Heart left ventricle (tissue), 16 donors: ENCODE measurements at regions of chr19 and their contacts with region 1.

Region 1: GRCh38 chr19:41449079-41449864 is 6.3 kb downstream of the ERICH4 start:
- DNase-seq: peak; percentile 74 to 89 (median 80)
- ATAC-seq: peak; percentile 70 to 93 (median 91)
- H3K4me3 ChIP-seq: peak overlapping the region in 9 of 12 donors; percentile 7 to 43 (median 32)
- H3K27ac ChIP-seq: no peak overlapping the region
- H3K4me1 ChIP-seq: peaks cover 0 to 21% (median 8%) of the 10 kb centered on the region in 12 donors
- H3K27me3 ChIP-seq: peaks cover 0 to 9% (median 0%) of the 10 kb centered on the region in 9 donors
- CTCF ChIP-seq: peak; percentile 96 to 100 (median 98)
- POLR2A ChIP-seq: no peak

Region 2: DNA sequence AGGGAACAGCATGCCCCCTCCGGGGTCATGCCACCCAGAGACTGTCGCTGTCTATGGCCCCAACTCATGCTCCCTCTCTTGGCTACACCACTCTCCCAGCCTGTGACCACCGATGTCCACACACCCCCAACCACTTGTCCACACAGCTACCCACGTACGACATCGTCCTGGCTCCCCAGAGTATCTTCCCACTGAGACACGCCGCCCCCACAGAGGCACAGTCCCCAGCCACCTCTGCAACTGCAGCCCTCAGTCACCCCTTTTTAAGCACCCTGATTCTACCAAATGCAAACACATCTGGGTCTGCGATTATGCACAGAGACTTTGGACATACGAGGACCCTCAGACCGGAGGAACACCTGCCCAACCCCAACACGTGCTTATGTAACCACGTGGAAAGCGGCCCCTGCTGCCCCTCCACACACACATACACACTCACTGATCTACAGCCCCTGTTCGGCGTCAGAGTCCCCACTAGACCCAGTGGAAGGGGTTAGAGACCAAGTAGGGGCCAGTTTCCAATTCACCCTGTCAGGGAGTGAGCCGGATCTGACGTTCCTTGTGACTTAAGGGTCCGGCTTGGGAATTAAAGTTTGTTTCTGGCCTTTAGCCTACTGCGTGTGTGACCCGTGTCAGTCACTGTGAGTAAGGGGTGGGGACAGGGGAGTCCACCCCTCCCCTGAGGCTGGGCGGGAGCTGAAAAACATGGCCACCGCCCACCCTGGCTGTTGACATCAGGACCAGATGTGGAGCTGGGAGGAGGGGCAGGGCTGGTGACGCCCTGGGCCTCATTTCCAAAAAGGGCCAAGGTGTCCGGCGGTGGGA is 242.1 kb before region 1 on chr19:
- intact Hi-C with region 1: loop called in 7 of 10 experiments (anchors 5 to 10 kb)
- DNase-seq: peak; percentile 82 to 95 (median 85)
- ATAC-seq: peak; percentile 75 to 89 (median 82)
- H3K4me3 ChIP-seq: peak overlapping the region in 6 of 12 donors; percentile 10 to 36 (median 17)
- H3K27ac ChIP-seq: peak overlapping the region in 11 of 12 donors; percentile 32 to 74 (median 69)
- H3K4me1 ChIP-seq: peaks cover 0 to 9% (median 0%) of the 10 kb centered on the region in 12 donors
- H3K27me3 ChIP-seq: no peaks in the 10 kb centered on the region
- CTCF ChIP-seq: no peak
- POLR2A ChIP-seq: no peak

Region 3: GRCh38 chr19:41351339-41352245 is 97.7 kb before region 1 on chr19:
- intact Hi-C with region 1: no loop called
- DNase-seq: peak; percentile 74 to 87 (median 78)
- ATAC-seq: peak; percentile 38 to 71 (median 65)
- H3K4me3 ChIP-seq: peak overlapping the region; percentile 52 to 98 (median 74)
- H3K27ac ChIP-seq: peak overlapping the region; percentile 66 to 96 (median 90)
- H3K4me1 ChIP-seq: peaks cover 0 to 57% (median 25%) of the 10 kb centered on the region in 12 donors
- H3K27me3 ChIP-seq: no peaks in the 10 kb centered on the region
- CTCF ChIP-seq: no peak
- POLR2A ChIP-seq: no peak

Region 4: GRCh38 chr19:41501854-41502253 is 52.6 kb after region 1 on chr19:
- intact Hi-C with region 1: loop called in 1 of 10 experiments (anchors 5 kb)
- DNase-seq: no peak
- ATAC-seq: no peak
- H3K4me3 ChIP-seq: peak overlapping the region in 1 of 12 donors; percentile 17
- H3K27ac ChIP-seq: peak overlapping the region in 11 of 12 donors; percentile 47 to 99 (median 92)
- H3K4me1 ChIP-seq: peaks cover 0 to 24% (median 0%) of the 10 kb centered on the region in 12 donors
- H3K27me3 ChIP-seq: peaks cover 0 to 21% (median 0%) of the 10 kb centered on the region in 9 donors
- CTCF ChIP-seq: no peak
- POLR2A ChIP-seq: no peak

Region 5: GRCh38 chr19:41541990-41542584 is 92.8 kb after region 1 on chr19:
- intact Hi-C with region 1: loop called in 9 of 10 experiments (anchors 1 to 10 kb)
- DNase-seq: peak in 4 of 5 donors; percentile 47 to 83 (median 53)
- ATAC-seq: no peak
- H3K4me3 ChIP-seq: no peak overlapping the region
- H3K27ac ChIP-seq: no peak overlapping the region
- H3K4me1 ChIP-seq: peaks cover 0 to 30% (median 3%) of the 10 kb centered on the region in 12 donors
- H3K27me3 ChIP-seq: peaks cover 0 to 14% (median 0%) of the 10 kb centered on the region in 9 donors
- CTCF ChIP-seq: peak; percentile 44 to 78 (median 64)
- POLR2A ChIP-seq: no peak

Region 6: GRCh38 chr19:41563854-41564514 is 114.7 kb after region 1 on chr19:
- intact Hi-C with region 1: loop called in 6 of 10 experiments (anchors 1 to 5 kb)
- DNase-seq: no peak
- ATAC-seq: no peak
- H3K4me3 ChIP-seq: peak overlapping the region in 7 of 12 donors; percentile 8 to 40 (median 13)
- H3K27ac ChIP-seq: no peak overlapping the region
- H3K4me1 ChIP-seq: peaks cover 0 to 32% (median 13%) of the 10 kb centered on the region in 12 donors
- H3K27me3 ChIP-seq: peaks cover 17 to 71% (median 38%) of the 10 kb centered on the region in 9 donors
- CTCF ChIP-seq: no peak
- POLR2A ChIP-seq: no peak

Region 7: GRCh38 chr19:41570639-41571112 is 121.4 kb after region 1 on chr19:
- intact Hi-C with region 1: loop called in 6 of 10 experiments (anchors 1 to 5 kb)
- DNase-seq: peak; percentile 72 to 89 (median 76)
- ATAC-seq: peak; percentile 80 to 96 (median 90)
- H3K4me3 ChIP-seq: no peak overlapping the region
- H3K27ac ChIP-seq: no peak overlapping the region
- H3K4me1 ChIP-seq: peaks cover 0 to 5% (median 0%) of the 10 kb centered on the region in 12 donors
- H3K27me3 ChIP-seq: peaks cover 2 to 53% (median 19%) of the 10 kb centered on the region in 9 donors
- CTCF ChIP-seq: peak; percentile 83 to 94 (median 88)
- POLR2A ChIP-seq: no peak

Region 8: GRCh38 chr19:41588497-41589209 is 139.4 kb after region 1 on chr19:
- intact Hi-C with region 1: no loop called
- DNase-seq: no peak
- ATAC-seq: peak in 2 of 4 donors; percentile 50
- H3K4me3 ChIP-seq: no peak overlapping the region
- H3K27ac ChIP-seq: no peak overlapping the region
- H3K4me1 ChIP-seq: no peaks in the 10 kb centered on the region
- H3K27me3 ChIP-seq: peaks cover 0 to 11% (median 0%) of the 10 kb centered on the region in 9 donors
- CTCF ChIP-seq: no peak
- POLR2A ChIP-seq: no peak